ENCODE measurements at regions of chr20 and their contacts with region 1.

Region 1: GRCh38 chr20:3407771-3408637 is 535 bp upstream of the DNAAF9 start:
- DNase-seq: peak; percentile 78 to 80
- ATAC-seq: peak; percentile 81 to 89 (median 86)
- H3K4me3 ChIP-seq: peak overlapping the region; percentile 54 to 94 (median 88)
- H3K27ac ChIP-seq: peak overlapping the region; percentile 89 to 98 (median 95)
- H3K4me1 ChIP-seq: peaks cover 0 to 40% (median 26%) of the 10 kb centered on the region in 9 donors
- H3K27me3 ChIP-seq: no peaks in the 10 kb centered on the region
- CTCF ChIP-seq: no peak

Region 2: GRCh38 chr20:3209257-3209945 is 198.6 kb before region 1 on chr20 and contains the start of gene ITPA:
- intact Hi-C with region 1: loop called in 1 of 10 experiments (anchors 5 kb)
- DNase-seq: peak; percentile 45 to 57
- ATAC-seq: peak; percentile 51 to 71 (median 61)
- H3K4me3 ChIP-seq: peak within 1 kb of the TSS; percentile 64 to 94 (median 81)
- H3K27ac ChIP-seq: peak within 1 kb of the TSS; percentile 74 to 94 (median 87)
- H3K4me1 ChIP-seq: peaks cover 5 to 27% (median 16%) of the 10 kb centered on the region in 9 donors
- H3K27me3 ChIP-seq: no peaks in the 10 kb centered on the region
- CTCF ChIP-seq: peak in 1 of 9 donors; percentile 11
- total RNA-seq, gene ITPA: 15.8 to 26.3 (median 21.5) TPM

Region 3: DNA sequence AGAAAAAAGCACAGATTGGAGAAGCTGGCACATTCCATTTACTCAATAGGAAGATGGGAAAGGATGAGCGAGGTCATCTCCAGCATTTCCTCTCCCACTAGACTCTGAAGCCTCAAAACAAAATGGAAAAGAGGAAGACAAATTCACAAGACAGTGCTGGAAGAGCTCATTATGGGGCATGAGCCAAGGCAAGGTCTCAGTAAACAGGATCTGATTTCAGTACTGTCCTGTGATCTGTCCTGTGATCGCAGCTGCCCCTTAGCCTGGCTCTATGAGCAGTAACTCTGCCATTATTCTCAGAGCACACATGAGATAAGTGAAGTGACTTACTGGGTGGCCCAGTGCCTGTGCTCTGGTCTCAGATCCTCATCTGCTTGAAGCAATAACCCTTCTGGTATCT is 100.9 kb before region 1 on chr20:
- intact Hi-C with region 1: no loop called
- DNase-seq: no peak
- ATAC-seq: peak in 7 of 8 donors; percentile 22 to 65 (median 36)
- H3K4me3 ChIP-seq: no peak overlapping the region
- H3K27ac ChIP-seq: peak overlapping the region in 2 of 10 donors; percentile 34 to 70
- H3K4me1 ChIP-seq: peaks cover 0 to 17% (median 4%) of the 10 kb centered on the region in 9 donors
- H3K27me3 ChIP-seq: no peaks in the 10 kb centered on the region
- CTCF ChIP-seq: no peak

Region 4: DNA sequence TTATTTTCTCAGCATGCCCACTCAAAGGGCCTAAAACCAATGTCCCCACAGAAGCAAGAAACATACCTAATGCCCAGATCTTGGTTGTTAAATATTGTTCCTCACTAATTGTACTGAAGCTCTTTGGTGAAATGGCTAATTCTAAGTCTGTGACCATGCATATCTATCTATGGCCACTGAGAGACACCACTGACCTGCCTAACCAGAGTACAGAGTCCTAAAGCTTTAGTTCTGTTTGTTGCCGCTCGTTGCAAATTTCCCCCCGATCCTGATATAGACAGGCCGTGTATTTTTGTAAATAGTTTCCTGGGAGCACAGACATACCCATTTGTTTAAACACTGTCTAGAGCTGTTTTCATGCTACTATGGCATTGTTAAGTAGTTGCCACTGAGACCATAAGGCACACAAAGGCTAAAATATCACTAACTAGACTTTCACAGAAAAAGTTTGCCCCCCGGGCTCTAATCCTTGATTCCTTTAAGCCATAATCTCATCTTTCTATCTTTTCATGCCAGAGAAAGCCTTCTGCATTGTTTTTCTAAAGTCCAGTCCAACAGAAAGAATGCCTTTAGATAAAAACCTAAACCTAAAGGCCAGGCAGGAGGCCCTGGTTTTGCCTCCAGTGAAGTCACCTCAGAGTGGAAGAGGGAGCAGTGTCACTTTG is 49.2 kb before region 1 on chr20:
- intact Hi-C with region 1: loop called in 1 of 10 experiments (anchors 10 kb)
- DNase-seq: no peak
- ATAC-seq: peak in 4 of 8 donors; percentile 39 to 54 (median 48)
- H3K4me3 ChIP-seq: no peak overlapping the region
- H3K27ac ChIP-seq: peak overlapping the region in 1 of 10 donors; percentile 54
- H3K4me1 ChIP-seq: peaks cover 0 to 49% (median 9%) of the 10 kb centered on the region in 9 donors
- H3K27me3 ChIP-seq: no peaks in the 10 kb centered on the region
- CTCF ChIP-seq: peak in 2 of 9 donors; percentile 25 to 28

Region 5: DNA sequence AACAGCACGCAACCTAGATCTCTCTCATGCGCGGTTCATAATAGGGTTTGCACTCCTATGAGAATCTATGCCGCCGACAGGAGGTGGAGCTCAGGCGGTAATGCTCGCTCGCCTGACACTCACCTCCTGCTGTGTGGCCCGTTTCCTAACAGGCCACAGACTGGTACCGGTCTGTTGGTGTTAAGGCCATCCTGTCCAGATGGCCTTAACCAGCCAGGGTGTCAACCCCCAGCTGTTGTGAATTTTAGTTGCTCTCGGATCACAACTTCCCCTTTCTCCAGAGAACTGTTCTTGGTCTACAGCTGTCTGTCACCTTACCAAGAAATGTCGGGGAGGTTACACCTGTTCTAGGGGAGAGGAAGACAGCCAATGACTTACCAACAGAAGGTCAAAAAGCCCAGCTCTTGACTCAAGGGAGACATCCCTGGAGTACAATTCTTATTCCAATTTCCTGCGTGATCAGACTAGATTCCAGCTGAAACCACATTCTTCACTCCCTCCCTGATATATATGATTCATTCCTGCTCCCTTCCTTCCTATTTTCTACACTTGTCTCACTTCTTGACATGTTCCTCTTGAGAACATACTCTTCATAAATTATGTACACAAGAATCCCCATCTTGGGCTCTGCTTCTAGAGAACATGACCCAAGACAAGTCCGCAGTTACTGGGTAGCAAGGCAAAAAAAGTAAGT is 22.5 kb after region 1 on chr20:
- intact Hi-C with region 1: no loop called
- DNase-seq: no peak
- ATAC-seq: peak in 7 of 8 donors; percentile 49 to 68 (median 55)
- H3K4me3 ChIP-seq: peak overlapping the region in 1 of 10 donors; percentile 7
- H3K27ac ChIP-seq: peak overlapping the region in 3 of 10 donors; percentile 3 to 70 (median 41)
- H3K4me1 ChIP-seq: peaks cover 0 to 16% (median 0%) of the 10 kb centered on the region in 9 donors
- H3K27me3 ChIP-seq: no peaks in the 10 kb centered on the region
- CTCF ChIP-seq: no peak